Colonic mucosa (tissue), 4 donors: ENCODE measurements at regions of chr1 and their contacts with region 1.

Region 1: GRCh38 chr1:17125756-17126237 is 6.5 kb upstream of the PADI2 start:
- DNase-seq: peak; percentile 94
- H3K4me3 ChIP-seq: no peak overlapping the region
- H3K27ac ChIP-seq: no peak overlapping the region
- H3K4me1 ChIP-seq: peaks cover 4% of the 10 kb centered on the region
- H3K27me3 ChIP-seq: no peaks in the 10 kb centered on the region
- CTCF ChIP-seq: peak; percentile 90

Region 2: GRCh38 chr1:17236779-17237560 is 111.2 kb after region 1 on chr1:
- intact Hi-C with region 1: loop called (anchors 1 kb)
- DNase-seq: peak; percentile 95
- H3K4me3 ChIP-seq: no peak overlapping the region
- H3K27ac ChIP-seq: no peak overlapping the region
- H3K4me1 ChIP-seq: peaks cover 11% of the 10 kb centered on the region
- H3K27me3 ChIP-seq: no peaks in the 10 kb centered on the region
- CTCF ChIP-seq: peak; percentile 91

Region 3: GRCh38 chr1:17250601-17251000 is 124.8 kb after region 1 on chr1:
- intact Hi-C with region 1: no loop called
- DNase-seq: peak; percentile 94
- H3K4me3 ChIP-seq: no peak overlapping the region
- H3K27ac ChIP-seq: peak overlapping the region; percentile 29
- H3K4me1 ChIP-seq: peaks cover 3% of the 10 kb centered on the region
- H3K27me3 ChIP-seq: no peaks in the 10 kb centered on the region
- CTCF ChIP-seq: no peak

Region 4: GRCh38 chr1:17304151-17304825 is 178.5 kb after region 1 on chr1:
- intact Hi-C with region 1: no loop called
- DNase-seq: no peak
- H3K4me3 ChIP-seq: no peak overlapping the region
- H3K27ac ChIP-seq: no peak overlapping the region
- H3K4me1 ChIP-seq: no peaks in the 10 kb centered on the region
- H3K27me3 ChIP-seq: no peaks in the 10 kb centered on the region
- CTCF ChIP-seq: no peak

Region 5: GRCh38 chr1:17335821-17336710 is 210.3 kb after region 1 on chr1:
- intact Hi-C with region 1: loop called (anchors 5 kb)
- DNase-seq: peak; percentile 78
- H3K4me3 ChIP-seq: no peak overlapping the region
- H3K27ac ChIP-seq: no peak overlapping the region
- H3K4me1 ChIP-seq: no peaks in the 10 kb centered on the region
- H3K27me3 ChIP-seq: no peaks in the 10 kb centered on the region
- CTCF ChIP-seq: peak; percentile 82

Region 6: DNA sequence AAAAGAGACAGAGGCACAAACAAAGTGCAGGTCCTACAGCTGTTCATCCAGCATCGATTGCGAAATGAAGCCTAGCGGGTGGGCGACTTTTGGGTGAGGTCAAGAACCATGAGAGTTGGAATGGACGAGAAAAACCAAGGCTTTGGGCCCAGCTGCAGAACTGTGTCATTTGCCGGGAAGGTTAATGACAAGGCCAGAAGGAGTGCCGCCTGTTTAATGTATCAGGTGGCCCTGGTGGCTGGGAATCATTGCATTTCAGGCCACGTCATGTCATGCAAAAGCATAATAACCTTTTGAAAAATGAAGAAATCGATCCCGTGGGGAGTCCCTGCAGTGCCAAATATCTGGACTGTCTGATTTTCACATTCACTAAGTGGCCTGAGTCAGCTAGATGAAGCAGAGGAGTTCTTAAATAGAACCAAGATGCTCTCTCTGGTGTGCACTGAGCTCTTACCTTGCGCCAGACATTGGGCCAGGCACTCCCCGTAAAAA is 321.8 kb after region 1 on chr1:
- intact Hi-C with region 1: no loop called
- DNase-seq: no peak
- H3K4me3 ChIP-seq: no peak overlapping the region
- H3K27ac ChIP-seq: no peak overlapping the region
- H3K4me1 ChIP-seq: no peaks in the 10 kb centered on the region
- H3K27me3 ChIP-seq: no peaks in the 10 kb centered on the region
- CTCF ChIP-seq: no peak